CD8-positive, alpha-beta T cell (primary cell): ENCODE measurements at regions of chr1 and their contacts with region 1.

Region 1: DNA sequence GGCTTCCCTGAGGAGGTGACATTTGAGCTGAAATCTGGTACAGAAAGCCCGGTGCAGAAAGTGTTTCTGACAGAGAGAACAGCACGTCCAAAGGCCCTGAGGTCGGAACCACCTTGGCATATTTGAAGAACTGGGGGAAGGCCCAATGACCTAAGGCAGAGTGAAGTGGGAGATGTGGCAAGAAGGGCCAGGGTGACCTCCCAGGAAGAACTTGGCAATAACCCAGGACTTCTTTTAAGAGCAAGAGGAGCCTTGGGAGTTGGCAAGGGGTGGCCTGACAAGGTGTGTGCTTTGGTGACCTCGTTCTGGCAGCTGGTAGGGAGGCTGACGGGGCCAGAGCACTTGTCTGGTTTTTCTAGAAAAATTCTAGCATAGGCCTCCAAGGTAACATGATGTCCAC is 23.4 kb downstream of the TTC39A start:
- DNase-seq: no peak
- ATAC-seq: no peak
- H3K4me3 ChIP-seq: no peak overlapping the region
- H3K4me3 Mint-ChIP-seq: no peak overlapping the region
- H3K27ac ChIP-seq: no peak overlapping the region
- H3K27ac Mint-ChIP-seq: no peak overlapping the region
- H3K4me1 ChIP-seq: no peaks in the 10 kb centered on the region
- H3K4me1 Mint-ChIP-seq: no peaks in the 10 kb centered on the region
- H3K27me3 ChIP-seq: no peaks in the 10 kb centered on the region
- H3K27me3 Mint-ChIP-seq: no peaks in the 10 kb centered on the region
- CTCF ChIP-seq: no peak

Region 2: DNA sequence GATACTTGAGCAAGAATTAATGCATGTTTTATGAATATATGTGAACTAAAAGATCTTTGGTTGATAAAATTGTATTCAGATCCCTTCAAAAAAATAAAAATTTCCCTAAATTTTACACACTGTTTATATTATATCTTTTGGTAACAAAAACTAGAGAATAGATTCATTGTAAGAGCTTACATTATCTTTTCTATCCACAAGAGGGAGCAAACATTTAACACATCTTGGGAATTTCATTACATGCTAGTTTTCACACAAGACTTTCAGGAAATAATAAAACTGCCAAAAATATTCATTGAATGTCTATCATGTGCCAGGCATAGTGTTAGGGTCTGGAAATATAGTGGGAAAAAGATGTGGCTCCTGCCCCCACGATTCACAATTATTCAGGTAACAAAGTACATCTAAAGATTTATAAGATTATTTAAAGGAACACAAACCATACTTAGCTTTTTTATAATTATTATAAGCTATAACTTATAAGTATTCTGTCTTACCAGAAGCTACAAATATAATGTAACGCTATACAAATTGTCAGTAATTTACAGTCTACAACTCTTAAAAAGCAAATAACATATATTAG is 377.5 kb before region 1 on chr1:
- CTCF ChIA-PET with region 1: no interaction called
- POLR2A ChIA-PET with region 1: no interaction called
- intact Hi-C with region 1: no loop called
- DNase-seq: peak in 2 of 9 experiments; percentile 30 to 50
- ATAC-seq: no peak
- H3K4me3 ChIP-seq: no peak overlapping the region
- H3K4me3 Mint-ChIP-seq: no peak overlapping the region
- H3K27ac ChIP-seq: no peak overlapping the region
- H3K27ac Mint-ChIP-seq: no peak overlapping the region
- H3K4me1 ChIP-seq: no peaks in the 10 kb centered on the region
- H3K4me1 Mint-ChIP-seq: peaks cover 29% of the 10 kb centered on the region
- H3K27me3 ChIP-seq: no peaks in the 10 kb centered on the region
- H3K27me3 Mint-ChIP-seq: no peaks in the 10 kb centered on the region
- CTCF ChIP-seq: peak; percentile 71

Region 3: DNA sequence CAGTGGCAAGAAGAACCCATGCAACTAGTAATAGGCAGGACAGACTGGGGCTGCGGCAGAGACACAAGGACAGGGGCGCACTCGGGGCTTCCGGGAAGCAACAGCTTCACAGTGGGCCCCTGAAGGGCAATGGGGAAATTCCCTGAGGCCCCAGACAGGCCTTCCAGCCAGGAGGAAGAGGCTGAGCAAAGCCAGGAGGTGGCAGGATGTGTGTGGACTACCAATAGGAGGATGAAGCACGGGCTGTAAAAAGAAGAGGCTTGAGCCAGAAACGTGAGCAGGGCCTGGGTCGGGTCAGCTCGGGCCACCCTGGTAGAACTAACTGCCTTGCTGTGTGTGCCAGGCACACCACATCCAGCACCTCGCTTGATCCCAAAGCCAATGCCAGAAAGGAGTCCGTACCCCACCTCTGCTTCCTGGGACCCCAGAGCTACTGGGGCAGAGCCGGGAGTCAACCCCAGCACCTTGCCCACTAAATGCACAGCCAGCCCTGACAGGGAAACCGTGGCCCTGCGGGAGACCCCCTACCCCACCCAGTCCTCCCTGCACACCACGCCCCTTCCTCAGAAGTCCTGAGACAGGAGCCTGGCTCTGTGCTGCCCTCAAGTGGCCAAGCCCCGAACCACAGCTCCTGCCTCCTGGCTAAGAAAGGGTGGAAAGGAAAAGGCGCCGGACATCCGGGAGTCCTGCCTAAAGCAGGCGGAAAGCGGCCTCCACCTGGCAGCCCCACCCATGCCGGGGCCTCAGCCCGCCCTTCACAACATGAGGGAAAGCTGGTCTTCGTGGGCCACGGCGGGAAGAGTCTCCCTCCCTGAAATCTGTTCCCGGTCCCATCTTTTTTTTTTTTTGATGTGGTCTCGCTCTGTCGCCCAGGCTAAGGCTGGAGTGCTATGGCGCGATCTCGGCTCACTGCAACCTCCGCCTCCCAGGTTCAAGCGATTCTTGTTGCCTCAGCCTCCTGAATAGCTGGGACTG is 10.3 kb before region 1 on chr1:
- CTCF ChIA-PET with region 1: interaction called, 14 read pairs
- POLR2A ChIA-PET with region 1: interaction called, 3 read pairs
- intact Hi-C with region 1: no loop called
- DNase-seq: peak; percentile 40 to 76 (median 69)
- ATAC-seq: peak; percentile 88
- H3K4me3 ChIP-seq: peak overlapping the region; percentile 34 to 46
- H3K4me3 Mint-ChIP-seq: peak overlapping the region; percentile 73
- H3K27ac ChIP-seq: no peak overlapping the region
- H3K27ac Mint-ChIP-seq: no peak overlapping the region
- H3K4me1 ChIP-seq: peaks cover 5% of the 10 kb centered on the region
- H3K4me1 Mint-ChIP-seq: peaks cover 10% of the 10 kb centered on the region
- H3K27me3 ChIP-seq: no peaks in the 10 kb centered on the region
- H3K27me3 Mint-ChIP-seq: no peaks in the 10 kb centered on the region
- CTCF ChIP-seq: peak; percentile 88

Region 4: DNA sequence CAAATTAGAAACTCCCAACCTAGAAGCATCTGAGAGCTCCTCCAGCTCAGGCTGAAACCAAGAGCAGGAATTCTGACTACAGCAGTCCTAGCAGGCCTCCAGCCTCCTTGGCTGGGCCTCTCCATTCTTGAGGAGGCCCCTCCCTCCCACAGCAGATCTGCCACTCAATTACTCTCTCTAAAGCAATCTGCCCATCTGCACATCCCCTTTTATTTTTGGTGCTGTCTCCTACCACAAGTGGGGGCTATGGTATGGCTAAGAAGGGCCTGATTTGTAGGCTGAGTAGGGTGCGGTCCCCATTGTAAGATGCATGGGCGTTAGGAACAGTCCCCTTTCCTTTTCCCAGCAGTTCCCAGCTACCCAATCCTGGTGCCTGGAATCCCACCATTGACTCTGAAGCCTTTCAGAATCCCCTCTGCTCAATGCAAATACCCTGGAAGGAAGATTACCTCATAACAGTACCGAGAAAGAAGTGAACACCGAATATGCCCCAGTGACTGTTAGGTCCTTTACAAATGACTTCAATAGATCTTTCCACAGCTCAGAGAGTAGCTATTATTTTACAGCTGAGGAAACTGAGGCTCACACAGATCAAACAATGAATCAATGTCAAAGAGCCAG is 35.0 kb after region 1 on chr1:
- CTCF ChIA-PET with region 1: no interaction called
- POLR2A ChIA-PET with region 1: no interaction called
- intact Hi-C with region 1: no loop called
- DNase-seq: peak in 2 of 9 experiments; percentile 14 to 18
- ATAC-seq: no peak
- H3K4me3 ChIP-seq: no peak overlapping the region
- H3K4me3 Mint-ChIP-seq: no peak overlapping the region
- H3K27ac ChIP-seq: no peak overlapping the region
- H3K27ac Mint-ChIP-seq: no peak overlapping the region
- H3K4me1 ChIP-seq: peaks cover 6% of the 10 kb centered on the region
- H3K4me1 Mint-ChIP-seq: peaks cover 6% of the 10 kb centered on the region
- H3K27me3 ChIP-seq: peaks cover 4 to 10% of the 10 kb centered on the region in 2 experiments
- H3K27me3 Mint-ChIP-seq: peaks cover 41% of the 10 kb centered on the region
- CTCF ChIP-seq: no peak